PC-9 (cell line): ENCODE measurements at regions of chrX and their contacts with region 1.

Region 1: DNA sequence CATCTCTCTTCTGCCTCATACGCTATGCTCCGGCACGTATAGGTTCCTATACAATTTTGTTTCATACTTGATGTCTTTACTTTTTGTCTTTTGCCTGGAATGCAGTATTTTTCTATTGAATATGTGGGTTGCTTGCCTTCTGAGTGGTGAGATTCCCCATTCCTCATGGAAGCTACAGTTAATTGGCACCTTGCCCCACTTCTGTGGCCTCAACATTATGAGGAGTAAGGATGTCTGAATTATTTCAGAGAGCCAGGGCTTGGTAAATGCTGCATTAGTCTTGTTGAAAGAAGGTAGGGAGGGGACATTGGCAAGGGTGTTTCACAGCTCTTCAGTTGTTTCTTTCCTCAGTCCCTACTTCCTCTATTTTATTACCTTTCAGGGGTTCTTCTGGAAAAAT is 23.0 kb downstream of the CDKL5 start:
- DNase-seq: no peak
- H3K4me3 ChIP-seq: no peak overlapping the region
- H3K27ac ChIP-seq: no peak overlapping the region
- H3K4me1 ChIP-seq: no peaks in the 10 kb centered on the region
- H3K27me3 ChIP-seq: no peaks in the 10 kb centered on the region
- CTCF ChIP-seq: no peak

Region 2: GRCh38 chrX:18228069-18228468 is 220.3 kb before region 1 on chrX:
- CTCF ChIA-PET with region 1: no interaction called
- POLR2A ChIA-PET with region 1: no interaction called
- intact Hi-C with region 1: no loop called
- DNase-seq: no peak
- H3K4me3 ChIP-seq: no peak overlapping the region
- H3K27ac ChIP-seq: no peak overlapping the region
- H3K4me1 ChIP-seq: no peaks in the 10 kb centered on the region
- H3K27me3 ChIP-seq: peaks cover 21% of the 10 kb centered on the region
- CTCF ChIP-seq: no peak

Region 3: DNA sequence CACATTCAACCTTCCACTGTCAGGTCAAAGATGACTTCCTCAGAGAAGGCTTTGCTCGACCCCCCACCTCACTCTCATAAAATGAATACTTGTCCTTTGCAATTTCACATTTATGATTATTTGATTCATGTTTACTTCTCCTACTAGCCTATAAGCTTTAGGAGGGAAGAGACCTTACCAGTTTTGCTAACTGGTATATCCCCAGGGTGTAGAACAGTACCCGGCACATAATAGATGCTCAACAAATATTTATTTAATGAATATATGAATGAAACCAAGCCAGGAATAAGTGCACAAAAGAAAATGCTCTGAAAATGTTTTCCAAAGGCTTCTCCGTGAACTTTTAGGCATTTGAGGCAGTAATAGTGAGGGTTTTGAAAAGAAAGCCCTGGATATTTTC is 241.5 kb after region 1 on chrX:
- CTCF ChIA-PET with region 1: interaction called, 12 read pairs
- POLR2A ChIA-PET with region 1: no interaction called
- intact Hi-C with region 1: no loop called
- DNase-seq: no peak
- H3K4me3 ChIP-seq: no peak overlapping the region
- H3K27ac ChIP-seq: no peak overlapping the region
- H3K4me1 ChIP-seq: no peaks in the 10 kb centered on the region
- H3K27me3 ChIP-seq: 0 out of 2 replicates have a peak, but pooled peaks cover 2% of the 10 kb centered on the region
- CTCF ChIP-seq: no peak